ENCODE measurements at regions of chr21 and their contacts with region 1.

Region 1: GRCh38 chr21:36319765-36320420 is at the start of gene MORC3:
- DNase-seq: peak; percentile 97
- CTCF ChIP-seq: no peak

Region 2: DNA sequence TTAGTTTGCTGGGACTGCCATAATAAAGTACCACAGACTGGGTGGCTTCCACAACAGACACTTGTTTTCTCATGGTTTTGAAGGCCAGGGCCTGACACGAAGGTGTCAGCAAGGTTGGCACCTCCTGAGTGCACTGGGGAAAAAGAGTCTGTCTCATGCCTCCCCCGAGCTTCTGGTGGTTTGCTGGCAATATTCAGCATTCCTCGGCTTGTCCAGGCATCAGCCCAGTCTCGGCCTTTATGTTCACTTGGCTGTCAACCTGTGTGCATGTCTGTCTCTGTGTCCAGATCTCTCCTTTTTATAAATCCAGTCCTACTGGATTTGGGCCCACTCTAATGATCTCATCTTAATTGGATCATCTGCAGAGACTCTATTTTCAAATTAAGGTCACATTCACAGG is 90.7 kb before region 1 on chr21:
- CTCF ChIA-PET with region 1: no interaction called
- POLR2A ChIA-PET with region 1: no interaction called
- DNase-seq: no peak
- CTCF ChIP-seq: no peak

Region 3: GRCh38 chr21:36288651-36289243 is 31.1 kb before region 1 on chr21:
- CTCF ChIA-PET with region 1: interaction called, 4 read pairs
- POLR2A ChIA-PET with region 1: interaction called, 12 read pairs
- DNase-seq: no peak
- CTCF ChIP-seq: no peak

Region 4: DNA sequence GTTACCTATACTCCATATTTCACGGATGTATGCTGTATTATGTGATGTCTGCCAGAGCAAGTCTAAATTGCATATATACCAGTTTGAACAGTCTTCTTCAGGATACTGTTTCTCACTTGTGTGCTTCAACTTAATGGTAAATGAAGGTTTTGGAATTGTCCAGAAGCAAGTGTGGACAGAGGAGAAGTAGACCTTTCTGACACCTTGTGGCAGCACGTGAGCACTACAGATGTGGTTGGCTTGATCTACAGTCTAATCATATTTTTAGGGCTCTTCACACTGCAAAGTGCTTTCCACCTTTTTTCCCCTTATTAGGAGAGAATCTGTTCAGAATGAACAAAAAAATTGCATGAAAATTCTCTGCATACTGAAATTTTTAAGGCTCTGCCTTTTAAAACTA is 11.0 kb after region 1 on chr21:
- CTCF ChIA-PET with region 1: interaction called, 36 read pairs
- POLR2A ChIA-PET with region 1: interaction called, 3 read pairs
- DNase-seq: peak; percentile 64
- CTCF ChIP-seq: peak; percentile 66